ENCODE measurements at regions of chr3 and their contacts with region 1.

Region 1: DNA sequence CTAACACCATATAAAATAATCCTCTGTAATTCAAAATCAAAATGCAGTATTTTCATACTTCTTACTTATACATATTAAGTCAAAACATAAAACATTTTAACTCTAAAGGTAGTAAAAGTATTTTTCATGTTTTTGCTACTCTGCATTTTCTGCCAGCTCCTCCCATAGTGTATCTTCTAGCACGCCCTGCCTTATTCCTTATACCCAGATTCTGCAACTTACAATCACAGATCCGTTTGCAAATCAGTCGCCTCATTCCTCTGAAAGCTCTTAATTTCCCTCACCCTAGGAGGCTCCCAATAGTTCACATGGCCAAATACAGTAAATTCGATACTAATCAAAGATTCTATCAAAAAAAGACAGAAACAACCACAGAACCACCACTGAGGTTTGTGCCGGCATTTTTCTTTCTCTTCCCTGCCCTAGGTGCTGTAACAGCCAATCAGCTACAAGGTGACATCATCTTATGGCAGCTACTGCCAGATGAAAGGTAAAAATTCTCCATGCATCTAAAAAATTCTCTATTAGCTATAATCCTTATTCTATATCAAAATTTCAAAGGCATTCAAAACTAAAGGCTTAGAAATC is 72.9 kb downstream of the CLASP2 start:
- DNase-seq: peak; percentile 56

Region 2: GRCh38 chr3:33658991-33659848 is 14.1 kb after region 1 on chr3:
- CTCF ChIA-PET with region 1: no interaction called
- POLR2A ChIA-PET with region 1: interaction called, 16 read pairs
- DNase-seq: peak; percentile 77